Activated T-helper 2 cell treated with anti-CD3 and anti-CD28 coated beads, Interferon-gamma antibody, Interleukin-2, Interleukin-4, amounts not matched to agents 10 μg/mL and 5 μg/mL and 100 μg/mL, durations not matched to agents 14 hours and 24 hours and 36 hours (primary cell): ENCODE measurements at regions of chr2 and their contacts with region 1.

Region 1: GRCh38 chr2:204177977-204178540 is 241.5 kb downstream of the ICOS start:
- DNase-seq: peak; percentile 55
- H3K4me3 Mint-ChIP-seq: no peak overlapping the region
- H3K27ac Mint-ChIP-seq: no peak overlapping the region
- H3K4me1 Mint-ChIP-seq: peaks cover 9% of the 10 kb centered on the region
- H3K27me3 Mint-ChIP-seq: peaks cover 42% of the 10 kb centered on the region

Region 2: DNA sequence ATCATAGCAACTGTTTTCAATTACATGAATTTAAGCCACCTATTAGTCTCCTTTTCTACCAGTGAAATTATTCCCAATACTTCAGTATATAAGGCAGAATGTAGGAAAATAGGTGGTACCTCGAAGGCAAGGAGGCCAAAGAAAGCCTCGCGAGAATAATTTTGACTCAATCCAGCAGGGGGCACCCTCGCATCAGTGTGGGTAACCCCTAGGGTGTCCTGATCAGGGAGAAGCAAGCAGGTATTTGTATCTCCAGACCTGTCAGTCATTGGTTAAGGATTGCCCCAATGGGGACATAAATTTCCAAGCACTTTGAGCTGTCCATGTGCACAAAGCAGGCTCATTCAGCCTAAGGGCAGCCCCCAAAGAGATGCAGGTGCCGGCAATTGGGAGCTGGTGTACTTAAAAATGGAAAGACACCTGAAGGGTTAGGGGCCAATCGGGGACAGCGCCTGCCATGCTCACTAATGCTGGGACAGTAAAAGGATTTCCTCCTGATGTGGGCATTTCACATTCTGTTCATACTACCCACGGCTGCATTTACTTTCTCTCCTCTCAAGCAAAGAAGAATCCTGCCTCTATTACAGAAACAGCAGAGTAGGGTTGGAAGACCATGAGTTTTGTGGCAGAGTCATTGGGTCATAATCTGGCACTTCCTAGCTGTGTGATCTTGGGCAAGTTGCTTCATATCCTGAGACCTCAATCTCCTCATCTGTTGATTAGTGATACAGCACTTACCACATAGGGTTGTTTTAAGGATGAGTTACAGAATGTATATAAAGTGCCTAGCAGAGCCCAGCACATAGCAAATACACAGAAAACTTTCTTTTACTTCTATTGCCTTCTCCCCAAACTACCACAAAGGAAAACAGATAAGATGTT is 105.4 kb before region 1 on chr2:
- intact Hi-C with region 1: loop called (anchors 1 kb)
- DNase-seq: peak; percentile 48
- H3K4me3 Mint-ChIP-seq: no peak overlapping the region
- H3K27ac Mint-ChIP-seq: no peak overlapping the region
- H3K4me1 Mint-ChIP-seq: peaks cover 11% of the 10 kb centered on the region
- H3K27me3 Mint-ChIP-seq: peaks cover 19% of the 10 kb centered on the region

Region 3: GRCh38 chr2:204145263-204145751 is 32.8 kb before region 1 on chr2:
- intact Hi-C with region 1: loop called (anchors 1 kb)
- DNase-seq: peak; percentile 69
- H3K4me3 Mint-ChIP-seq: peak overlapping the region; percentile 76
- H3K27ac Mint-ChIP-seq: peak overlapping the region; percentile 75
- H3K4me1 Mint-ChIP-seq: peaks cover 19% of the 10 kb centered on the region
- H3K27me3 Mint-ChIP-seq: peaks cover 30% of the 10 kb centered on the region

Region 4: DNA sequence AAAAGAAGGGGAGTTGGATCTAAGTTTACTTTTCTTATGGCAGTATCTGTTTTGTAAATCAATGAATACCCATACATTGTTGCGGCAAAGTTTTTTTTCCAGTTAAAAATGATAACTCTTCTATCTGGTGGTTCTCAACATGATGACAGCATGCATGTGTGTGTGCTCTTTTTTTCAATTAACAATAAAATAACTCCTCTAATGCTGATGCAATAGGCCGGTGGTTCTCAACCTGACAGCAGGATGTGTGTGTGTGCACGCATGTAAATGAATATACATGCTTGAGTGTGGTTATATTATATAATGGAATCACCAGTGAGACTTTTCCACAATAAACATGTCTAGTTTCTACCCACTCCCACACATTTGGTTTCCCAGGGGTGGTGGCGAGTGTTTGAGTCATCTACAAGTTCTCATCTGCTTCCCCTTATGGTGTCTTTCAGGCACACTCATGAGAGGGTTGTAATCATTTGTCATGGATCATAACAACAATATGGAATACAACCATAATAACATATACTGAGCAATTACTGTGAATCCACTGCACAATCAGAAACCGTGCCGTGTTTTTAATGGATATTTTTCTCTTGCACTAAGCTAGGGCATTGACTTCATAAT is 398.4 kb after region 1 on chr2:
- intact Hi-C with region 1: no loop called
- DNase-seq: no peak
- H3K4me3 Mint-ChIP-seq: no peak overlapping the region
- H3K27ac Mint-ChIP-seq: no peak overlapping the region
- H3K4me1 Mint-ChIP-seq: no peaks in the 10 kb centered on the region
- H3K27me3 Mint-ChIP-seq: peaks cover 10% of the 10 kb centered on the region